Activated CD4-positive, alpha-beta T cell treated with anti-CD3 and anti-CD28 coated beads for 36 hours (primary cell): ENCODE measurements at regions of chr13 and their contacts with region 1.

Region 1: GRCh38 chr13:48144413-48145035 is 49.6 kb upstream of the MED4 start:
- DNase-seq: no peak
- ATAC-seq: no peak
- H3K4me3 Mint-ChIP-seq: no peak overlapping the region
- H3K27ac Mint-ChIP-seq: no peak overlapping the region
- H3K4me1 Mint-ChIP-seq: peaks cover 9% of the 10 kb centered on the region
- H3K27me3 Mint-ChIP-seq: no peaks in the 10 kb centered on the region

Region 2: DNA sequence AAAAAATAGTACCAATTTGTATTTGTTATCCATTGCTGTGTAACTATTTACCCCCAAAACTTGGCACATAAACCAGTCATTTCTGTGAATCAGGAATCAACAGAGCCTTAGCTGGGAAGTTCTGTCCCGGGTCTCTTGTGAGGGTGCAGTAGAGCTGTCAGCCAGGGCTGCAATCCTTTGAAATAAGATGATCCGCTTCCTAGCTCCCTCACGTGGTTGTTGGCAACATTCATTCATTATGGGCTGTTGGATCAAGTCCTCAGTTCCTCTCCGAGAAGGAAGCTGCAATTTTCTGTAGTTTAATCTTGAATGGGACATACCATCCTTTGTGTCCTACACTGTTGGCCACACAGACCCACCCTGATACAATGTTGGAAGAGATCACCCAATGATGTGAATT is 420.6 kb before region 1 on chr13:
- CTCF ChIA-PET with region 1: no interaction called
- POLR2A ChIA-PET with region 1: no interaction called
- intact Hi-C with region 1: no loop called
- DNase-seq: no peak
- ATAC-seq: no peak
- H3K4me3 Mint-ChIP-seq: no peak overlapping the region
- H3K27ac Mint-ChIP-seq: no peak overlapping the region
- H3K4me1 Mint-ChIP-seq: no peaks in the 10 kb centered on the region
- H3K27me3 Mint-ChIP-seq: no peaks in the 10 kb centered on the region

Region 3: DNA sequence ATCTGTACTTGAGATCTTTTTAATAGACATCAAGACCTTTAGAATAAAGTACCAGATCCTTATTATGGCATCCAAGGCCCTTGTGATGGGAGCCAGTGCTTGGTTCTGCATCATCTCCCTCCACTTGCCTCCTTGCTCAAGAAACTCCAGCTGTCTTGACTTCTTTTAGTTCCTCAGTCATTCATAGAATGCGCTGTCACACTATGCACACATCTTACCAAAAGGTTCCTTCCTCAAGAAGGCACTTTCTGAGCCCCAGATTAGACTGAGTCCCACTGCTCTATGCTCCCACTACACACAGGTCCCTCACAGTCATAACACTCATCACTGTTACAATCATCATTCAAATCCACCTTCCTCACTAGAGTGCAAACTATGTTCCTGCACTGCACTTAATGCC is 30.7 kb after region 1 on chr13:
- CTCF ChIA-PET with region 1: no interaction called
- POLR2A ChIA-PET with region 1: interaction called, 10 read pairs
- intact Hi-C with region 1: no loop called
- DNase-seq: no peak
- ATAC-seq: peak; percentile 68
- H3K4me3 Mint-ChIP-seq: no peak overlapping the region
- H3K27ac Mint-ChIP-seq: peak overlapping the region; percentile 7
- H3K4me1 Mint-ChIP-seq: no peaks in the 10 kb centered on the region
- H3K27me3 Mint-ChIP-seq: no peaks in the 10 kb centered on the region